Calu3 (cell line): ENCODE measurements at regions of chr5 and their contacts with region 1.

Region 1: DNA sequence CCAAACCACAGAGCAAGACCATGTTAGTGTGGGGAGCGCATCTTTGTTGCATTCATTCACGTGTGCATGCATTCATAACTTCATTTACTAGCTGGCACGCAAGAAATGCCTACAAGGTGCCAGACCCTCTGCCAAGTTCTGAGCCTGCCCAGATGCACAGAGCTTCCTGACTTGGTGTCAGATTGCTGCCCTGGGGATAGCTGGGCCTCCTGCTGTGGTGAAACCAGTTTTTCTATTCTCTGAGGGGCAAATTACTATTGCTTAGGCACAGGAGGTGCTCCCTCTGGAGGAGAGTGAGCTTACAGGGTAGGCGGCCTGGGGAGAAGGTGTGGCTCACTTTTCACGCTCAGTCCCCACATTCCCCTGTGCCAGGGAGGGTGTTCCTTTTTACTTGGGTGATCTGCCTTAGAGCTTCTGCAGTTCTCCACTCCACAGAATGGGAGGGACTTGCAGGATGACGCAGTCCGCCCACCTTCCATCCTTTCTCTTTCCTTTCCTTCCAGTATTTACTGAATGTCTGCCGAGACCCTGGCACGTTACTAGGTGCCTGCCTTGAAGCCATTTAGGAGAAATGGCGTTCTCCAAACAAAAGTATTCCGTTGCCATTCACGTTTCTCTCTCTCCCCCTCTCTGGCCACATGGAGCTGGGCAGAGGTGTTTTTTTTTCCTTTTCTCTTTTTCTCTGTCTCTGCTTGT is 27.9 kb upstream of the CTNNA1 start:
- DNase-seq: peak; percentile 93
- H3K4me3 Mint-ChIP-seq: peak overlapping the region; percentile 18
- H3K27ac Mint-ChIP-seq: peak overlapping the region; percentile 58
- H3K4me1 Mint-ChIP-seq: peaks cover 44% of the 10 kb centered on the region
- H3K27me3 Mint-ChIP-seq: no peaks in the 10 kb centered on the region
- CTCF ChIP-seq: peak; percentile 79

Region 2: DNA sequence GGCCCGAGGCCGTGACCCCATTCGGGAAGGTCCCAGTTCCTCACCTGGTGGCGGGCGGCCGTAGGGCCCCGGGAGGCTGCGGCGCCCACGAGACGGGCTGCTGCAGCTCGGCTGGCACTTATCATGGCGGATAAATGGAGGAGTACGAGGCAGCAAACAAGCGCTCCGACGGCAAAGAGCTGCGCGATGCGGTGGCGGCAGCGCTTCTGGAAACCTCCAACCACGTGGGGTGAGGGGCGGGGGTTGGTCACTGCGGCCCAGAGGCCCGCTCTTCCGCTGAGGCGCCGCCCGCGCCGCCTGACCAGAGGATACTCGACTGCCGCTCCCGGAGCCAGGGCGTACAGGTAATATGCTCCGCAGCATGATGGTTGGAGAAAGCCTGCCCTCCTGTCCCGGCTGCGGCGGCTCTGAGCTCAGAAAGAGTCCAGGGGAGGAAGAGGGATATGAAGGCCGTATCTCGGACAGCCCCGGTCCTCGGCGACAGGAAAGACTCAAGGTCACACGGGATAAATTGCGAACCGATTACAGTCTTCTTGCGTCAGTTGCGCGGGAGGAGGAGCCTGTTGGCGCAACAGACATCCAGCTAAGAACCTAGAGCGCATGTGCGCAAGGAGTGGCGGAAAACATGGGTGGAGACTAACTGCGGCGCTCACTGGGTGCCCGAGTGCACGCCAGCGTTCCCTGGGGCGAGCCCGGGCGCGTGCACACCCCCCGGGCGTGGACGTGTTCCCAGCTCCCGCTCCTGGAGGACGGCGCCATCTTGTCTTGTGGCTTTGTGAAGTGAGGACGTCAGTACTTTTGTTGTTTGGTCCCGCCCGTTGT is 149.9 kb before region 1 on chr5 and contains the start of gene HSPA9:
- CTCF ChIA-PET with region 1: interaction called, 16 read pairs
- intact Hi-C with region 1: loop called (anchors 5 kb)
- DNase-seq: peak; percentile 99
- H3K4me3 Mint-ChIP-seq: peak within 1 kb of the TSS; percentile 94
- H3K27ac Mint-ChIP-seq: peak within 1 kb of the TSS; percentile 99
- H3K4me1 Mint-ChIP-seq: peaks cover 17% of the 10 kb centered on the region
- H3K27me3 Mint-ChIP-seq: no peaks in the 10 kb centered on the region
- CTCF ChIP-seq: no peak
- total RNA-seq, gene HSPA9: 455 and 460 TPM in 2 replicates

Region 3: GRCh38 chr5:138654281-138654867 is 70.9 kb before region 1 on chr5:
- CTCF ChIA-PET with region 1: interaction called, 10 read pairs
- intact Hi-C with region 1: loop called (anchors 1 kb)
- DNase-seq: peak; percentile 42
- H3K4me3 Mint-ChIP-seq: no peak overlapping the region
- H3K27ac Mint-ChIP-seq: peak overlapping the region; percentile 40
- H3K4me1 Mint-ChIP-seq: peaks cover 31% of the 10 kb centered on the region
- H3K27me3 Mint-ChIP-seq: peaks cover 26% of the 10 kb centered on the region
- CTCF ChIP-seq: no peak

Region 4: DNA sequence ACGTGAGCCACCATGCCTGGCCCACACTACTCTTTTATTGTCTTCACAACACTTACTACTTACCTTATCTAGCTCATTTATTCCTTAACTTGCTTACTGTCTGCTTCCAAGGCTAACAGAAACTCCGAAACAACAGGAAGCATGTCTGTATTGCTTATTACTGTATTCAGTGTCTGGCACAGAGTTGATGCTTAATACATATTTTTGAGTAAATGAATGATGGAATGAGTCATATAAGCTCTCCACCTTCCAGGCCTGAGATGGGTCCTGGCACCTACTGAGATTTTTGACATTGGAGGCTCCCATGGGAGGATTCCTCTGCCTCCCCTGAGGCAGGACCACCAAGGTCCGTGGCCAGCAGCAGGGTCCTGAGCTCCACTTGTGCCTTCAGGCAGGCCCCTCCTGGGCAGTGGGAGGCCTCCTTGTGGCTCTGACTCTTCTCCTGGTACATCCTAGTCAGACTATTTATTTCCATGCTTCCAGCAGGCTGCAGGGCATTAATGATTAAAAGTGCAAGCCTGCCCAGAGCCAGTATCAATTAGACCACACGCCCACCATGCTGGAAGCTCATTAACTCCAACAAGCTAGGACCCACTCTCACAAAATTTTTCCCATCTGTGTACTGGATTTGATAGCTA is 48.6 kb before region 1 on chr5:
- CTCF ChIA-PET with region 1: interaction called, 13 read pairs
- intact Hi-C with region 1: no loop called
- DNase-seq: peak; percentile 26
- H3K4me3 Mint-ChIP-seq: peak overlapping the region; percentile 54
- H3K27ac Mint-ChIP-seq: peak overlapping the region; percentile 99
- H3K4me1 Mint-ChIP-seq: peaks cover 27% of the 10 kb centered on the region
- H3K27me3 Mint-ChIP-seq: no peaks in the 10 kb centered on the region
- CTCF ChIP-seq: no peak

Region 5: GRCh38 chr5:138714694-138715093 is 10.6 kb before region 1 on chr5:
- CTCF ChIA-PET with region 1: interaction called, 14 read pairs
- intact Hi-C with region 1: no loop called
- DNase-seq: no peak
- H3K4me3 Mint-ChIP-seq: no peak overlapping the region
- H3K27ac Mint-ChIP-seq: no peak overlapping the region
- H3K4me1 Mint-ChIP-seq: peaks cover 28% of the 10 kb centered on the region
- H3K27me3 Mint-ChIP-seq: no peaks in the 10 kb centered on the region
- CTCF ChIP-seq: no peak

Region 6: DNA sequence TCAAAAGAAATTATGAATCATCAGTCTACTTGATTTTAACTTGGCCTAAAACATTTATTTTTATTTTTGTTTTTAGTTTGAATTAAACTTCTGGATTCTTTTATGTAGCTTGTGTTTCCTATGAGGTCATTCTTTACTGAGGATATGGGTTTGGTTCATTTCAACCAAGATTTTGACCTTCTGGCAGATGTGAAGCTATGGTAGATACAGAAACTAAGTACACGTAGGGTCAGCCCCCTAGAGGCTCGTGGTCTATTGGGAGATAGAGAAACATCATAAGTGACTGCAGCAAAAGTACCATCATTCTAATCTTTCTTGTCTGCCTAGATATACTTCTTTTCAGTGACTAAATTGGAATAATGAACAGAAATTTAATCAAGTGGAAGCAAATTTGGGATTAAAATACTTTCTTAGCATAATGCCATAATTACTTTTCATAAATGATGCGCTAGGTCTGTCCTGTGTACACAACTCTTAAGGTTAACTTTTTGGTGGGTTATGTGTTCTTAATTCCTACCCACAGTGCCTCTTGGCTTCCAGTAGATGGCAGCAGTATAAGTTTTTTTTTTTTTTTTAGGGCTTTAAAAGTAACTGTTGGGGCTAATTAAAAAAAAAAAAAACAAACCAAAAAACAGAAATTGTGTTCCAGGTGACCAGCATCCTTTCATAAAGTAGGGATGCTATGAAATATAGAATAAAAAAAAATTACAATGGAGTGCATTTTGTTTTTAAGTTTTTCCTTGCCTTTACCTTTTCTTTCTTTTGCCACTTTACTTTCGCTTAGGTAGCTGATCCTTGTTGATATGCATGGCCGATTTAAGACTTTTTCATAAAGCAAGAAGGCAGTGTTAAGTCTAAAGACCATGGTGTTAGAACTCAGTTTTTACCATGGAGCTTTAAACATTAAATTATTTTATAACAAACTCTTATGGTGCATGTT is 99.9 kb after region 1 on chr5:
- CTCF ChIA-PET with region 1: no interaction called
- intact Hi-C with region 1: no loop called
- DNase-seq: no peak
- H3K4me3 Mint-ChIP-seq: no peak overlapping the region
- H3K27ac Mint-ChIP-seq: no peak overlapping the region
- H3K4me1 Mint-ChIP-seq: no peaks in the 10 kb centered on the region
- H3K27me3 Mint-ChIP-seq: no peaks in the 10 kb centered on the region
- CTCF ChIP-seq: peak; percentile 27

Region 7: DNA sequence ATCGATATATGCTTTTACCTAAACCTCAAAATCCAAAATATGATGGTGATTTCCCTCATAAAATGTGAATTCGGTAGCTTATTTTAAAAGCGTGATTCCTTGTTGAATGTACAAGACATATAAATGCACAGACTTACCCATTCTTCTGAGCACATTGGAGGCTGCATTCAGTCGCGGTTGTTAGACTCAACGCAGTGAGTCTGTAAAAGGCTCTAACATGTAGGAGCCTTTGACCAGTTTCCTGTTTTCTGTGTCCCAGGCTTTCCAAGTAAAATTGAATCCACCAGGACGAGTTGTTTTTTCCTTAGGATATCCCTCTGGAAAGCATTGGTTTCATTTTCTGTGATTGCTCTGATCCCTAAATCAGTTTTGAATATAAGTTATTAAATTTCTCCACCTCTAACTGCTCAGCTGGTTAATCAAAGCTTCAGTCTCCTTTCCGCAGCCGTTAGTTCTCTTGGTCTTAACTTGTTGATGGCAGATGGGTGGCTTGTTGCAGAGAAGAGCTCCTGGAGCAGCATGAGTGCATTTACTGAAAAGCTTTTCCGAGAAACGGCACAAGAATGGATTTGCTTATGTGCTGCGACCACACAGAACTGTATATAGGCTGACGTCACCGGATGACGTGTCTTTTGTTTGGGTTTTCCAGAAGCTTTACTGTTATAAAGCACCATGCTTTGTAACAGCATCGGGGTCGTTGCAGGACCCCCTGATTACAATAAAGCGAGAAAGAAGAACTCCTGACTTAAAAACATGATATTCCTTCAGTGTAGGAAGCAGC is 149.7 kb after region 1 on chr5 and contains the start of gene LRRTM2:
- CTCF ChIA-PET with region 1: no interaction called
- intact Hi-C with region 1: no loop called
- DNase-seq: no peak
- H3K4me3 Mint-ChIP-seq: no peak within 1 kb of the TSS
- H3K27ac Mint-ChIP-seq: no peak within 1 kb of the TSS
- H3K4me1 Mint-ChIP-seq: peaks cover 35% of the 10 kb centered on the region
- H3K27me3 Mint-ChIP-seq: no peaks in the 10 kb centered on the region
- CTCF ChIP-seq: no peak
- total RNA-seq, gene LRRTM2: not detected in 2 replicates